ENCODE measurements at regions of chr19 and their contacts with region 1.

Region 1: GRCh38 chr19:56403764-56404704 is at the start of gene ZNF583:
- DNase-seq: peak; percentile 97 to 98
- ATAC-seq: peak; percentile 97 to 99 (median 99)
- H3K4me3 ChIP-seq: peak within 1 kb of the TSS; percentile 57 to 80 (median 72)
- H3K27ac ChIP-seq: peak within 1 kb of the TSS; percentile 93 to 99 (median 96)
- H3K4me1 ChIP-seq: peaks cover 4 to 20% (median 14%) of the 10 kb centered on the region in 9 donors
- H3K27me3 ChIP-seq: no peaks in the 10 kb centered on the region
- CTCF ChIP-seq: no peak
- total RNA-seq, gene ZNF583: 4.6 to 7.1 (median 5.4) TPM

Region 2: DNA sequence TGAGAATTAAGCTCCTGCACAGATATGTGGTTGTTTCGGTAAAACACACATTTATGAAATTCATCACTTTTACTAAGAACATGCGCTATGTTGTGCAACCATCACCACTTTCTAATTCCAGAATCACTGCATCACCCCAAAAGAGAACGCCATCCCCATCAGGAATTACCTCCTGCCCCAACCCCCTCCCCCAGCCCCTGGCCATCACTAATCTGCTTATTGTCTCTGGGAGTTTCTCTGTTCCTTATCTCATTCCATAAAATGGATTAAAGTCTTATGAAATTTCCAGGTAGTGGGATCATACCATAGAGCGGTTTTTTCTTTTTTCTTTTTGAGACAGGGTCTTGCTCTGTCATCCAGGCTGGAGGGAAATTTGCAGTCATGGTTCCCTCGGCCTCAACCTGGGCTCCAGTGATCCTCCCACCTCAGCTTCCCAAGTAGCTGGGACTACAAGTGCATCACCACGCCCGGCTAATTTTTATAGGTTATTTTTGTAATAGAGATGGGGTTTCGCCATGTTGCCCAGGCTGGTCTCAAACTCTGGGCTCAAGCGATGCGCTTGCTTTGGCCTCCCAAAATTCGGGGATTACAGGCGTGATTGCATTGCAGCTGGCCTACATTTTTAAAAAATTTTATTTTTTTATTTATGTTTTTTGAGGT is 209.9 kb before region 1 on chr19:
- intact Hi-C with region 1: no loop called
- DNase-seq: no peak
- ATAC-seq: no peak
- H3K4me3 ChIP-seq: no peak overlapping the region
- H3K27ac ChIP-seq: no peak overlapping the region
- H3K4me1 ChIP-seq: no peaks in the 10 kb centered on the region
- H3K27me3 ChIP-seq: peaks cover 0 to 2% (median 0%) of the 10 kb centered on the region in 7 donors
- CTCF ChIP-seq: no peak

Region 3: GRCh38 chr19:56252699-56253422 is 151.2 kb before region 1 on chr19:
- intact Hi-C with region 1: no loop called
- DNase-seq: peak; percentile 57 to 85
- ATAC-seq: peak; percentile 43 to 86 (median 76)
- H3K4me3 ChIP-seq: no peak overlapping the region
- H3K27ac ChIP-seq: no peak overlapping the region
- H3K4me1 ChIP-seq: peaks cover 0 to 4% (median 0%) of the 10 kb centered on the region in 9 donors
- H3K27me3 ChIP-seq: no peaks in the 10 kb centered on the region
- CTCF ChIP-seq: peak; percentile 58 to 87 (median 79)

Region 4: GRCh38 chr19:56356944-56357343 is 47.1 kb before region 1 on chr19:
- intact Hi-C with region 1: no loop called
- DNase-seq: no peak
- ATAC-seq: no peak
- H3K4me3 ChIP-seq: no peak overlapping the region
- H3K27ac ChIP-seq: no peak overlapping the region
- H3K4me1 ChIP-seq: no peaks in the 10 kb centered on the region
- H3K27me3 ChIP-seq: no peaks in the 10 kb centered on the region
- CTCF ChIP-seq: no peak

Region 5: GRCh38 chr19:56507446-56508289 is 103.6 kb after region 1 on chr19 and contains the start of gene ZNF471:
- intact Hi-C with region 1: loop called in 1 of 10 experiments (anchors 10 kb)
- DNase-seq: peak; percentile 99
- ATAC-seq: peak; percentile 100
- H3K4me3 ChIP-seq: peak within 1 kb of the TSS; percentile 48 to 85 (median 71)
- H3K27ac ChIP-seq: peak within 1 kb of the TSS; percentile 93 to 99 (median 98)
- H3K4me1 ChIP-seq: peaks cover 0 to 17% (median 11%) of the 10 kb centered on the region in 9 donors
- H3K27me3 ChIP-seq: no peaks in the 10 kb centered on the region
- CTCF ChIP-seq: no peak
- total RNA-seq, gene ZNF471: 3.9 to 7.7 (median 5.5) TPM

Region 6: DNA sequence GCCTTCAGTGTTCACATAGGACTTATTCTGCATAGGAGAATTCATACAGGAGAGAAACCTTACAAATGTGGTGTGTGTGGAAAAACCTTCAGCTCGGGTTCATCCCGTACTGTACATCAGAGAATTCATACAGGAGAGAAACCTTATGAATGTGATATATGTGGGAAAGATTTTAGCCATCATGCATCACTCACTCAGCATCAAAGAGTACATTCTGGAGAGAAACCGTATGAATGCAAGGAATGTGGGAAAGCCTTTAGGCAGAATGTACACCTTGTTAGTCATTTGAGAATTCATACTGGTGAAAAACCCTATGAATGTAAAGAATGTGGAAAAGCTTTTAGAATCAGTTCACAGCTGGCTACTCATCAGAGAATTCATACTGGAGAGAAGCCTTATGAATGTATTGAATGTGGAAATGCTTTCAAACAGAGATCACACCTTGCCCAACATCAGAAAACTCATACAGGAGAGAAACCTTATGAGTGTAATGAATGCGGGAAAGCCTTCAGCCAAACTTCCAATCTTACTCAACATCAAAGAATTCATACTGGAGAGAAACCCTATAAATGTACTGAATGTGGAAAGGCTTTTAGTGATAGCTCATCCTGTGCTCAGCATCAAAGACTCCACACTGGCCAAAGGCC is 121.3 kb after region 1 on chr19:
- intact Hi-C with region 1: loop called in 2 of 10 experiments (anchors 5 to 10 kb)
- DNase-seq: no peak
- ATAC-seq: no peak
- H3K4me3 ChIP-seq: no peak overlapping the region
- H3K27ac ChIP-seq: no peak overlapping the region
- H3K4me1 ChIP-seq: no peaks in the 10 kb centered on the region
- H3K27me3 ChIP-seq: no peaks in the 10 kb centered on the region
- CTCF ChIP-seq: no peak

Region 7: DNA sequence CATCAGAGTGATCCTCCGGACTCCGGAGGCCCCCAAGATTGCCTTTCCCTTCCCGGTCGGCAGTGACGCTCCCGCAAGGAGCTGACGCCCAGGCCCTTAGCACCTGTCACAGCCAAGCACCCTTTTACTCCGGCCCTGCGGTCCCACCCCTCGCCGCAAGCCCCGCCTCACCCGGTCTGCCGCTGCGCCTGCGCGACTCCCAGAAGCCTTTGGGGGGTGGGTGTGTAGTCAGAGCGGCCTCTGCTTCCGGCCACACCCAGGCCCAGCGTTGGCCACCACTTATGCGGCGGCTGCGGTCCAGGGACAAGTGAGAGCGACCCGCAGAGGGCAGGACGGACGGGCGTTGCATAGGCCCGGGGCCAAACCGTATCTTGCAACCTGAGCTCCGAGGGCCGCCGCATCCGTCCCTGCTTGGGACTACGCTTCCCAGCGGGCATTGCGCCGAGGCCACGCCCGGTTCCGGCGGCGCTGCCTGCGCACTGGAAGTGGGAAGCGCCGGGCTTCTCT is 134.3 kb after region 1 on chr19:
- intact Hi-C with region 1: loop called in 1 of 10 experiments (anchors 10 kb)
- DNase-seq: peak; percentile 94 to 95
- ATAC-seq: peak; percentile 97 to 100 (median 99)
- H3K4me3 ChIP-seq: peak overlapping the region; percentile 59 to 93 (median 75)
- H3K27ac ChIP-seq: peak overlapping the region; percentile 87 to 99 (median 95)
- H3K4me1 ChIP-seq: peaks cover 0 to 22% (median 14%) of the 10 kb centered on the region in 9 donors
- H3K27me3 ChIP-seq: no peaks in the 10 kb centered on the region
- CTCF ChIP-seq: no peak

Region 8: DNA sequence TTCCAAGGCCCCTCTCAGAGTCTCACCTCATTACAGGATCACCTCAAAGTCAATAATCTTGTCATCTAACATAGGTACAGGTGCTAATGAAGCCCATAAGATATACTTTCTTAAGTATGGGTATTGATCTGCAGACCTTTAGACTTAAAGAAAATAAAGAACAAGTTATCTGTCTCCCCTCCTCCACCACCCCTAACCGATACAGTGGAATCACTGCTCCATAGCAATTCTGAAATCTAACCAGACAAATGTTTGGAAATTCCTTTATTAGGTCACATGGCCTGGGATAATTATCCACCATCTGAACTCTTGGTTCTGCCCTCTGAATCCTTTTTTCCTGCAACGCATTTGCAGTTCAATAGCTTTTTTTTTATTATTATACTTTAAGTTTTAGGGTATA is 158.7 kb after region 1 on chr19:
- intact Hi-C with region 1: no loop called
- DNase-seq: no peak
- ATAC-seq: no peak
- H3K4me3 ChIP-seq: no peak overlapping the region
- H3K27ac ChIP-seq: no peak overlapping the region
- H3K4me1 ChIP-seq: peaks cover 0 to 11% (median 5%) of the 10 kb centered on the region in 9 donors
- H3K27me3 ChIP-seq: no peaks in the 10 kb centered on the region
- CTCF ChIP-seq: no peak

Region 9: DNA sequence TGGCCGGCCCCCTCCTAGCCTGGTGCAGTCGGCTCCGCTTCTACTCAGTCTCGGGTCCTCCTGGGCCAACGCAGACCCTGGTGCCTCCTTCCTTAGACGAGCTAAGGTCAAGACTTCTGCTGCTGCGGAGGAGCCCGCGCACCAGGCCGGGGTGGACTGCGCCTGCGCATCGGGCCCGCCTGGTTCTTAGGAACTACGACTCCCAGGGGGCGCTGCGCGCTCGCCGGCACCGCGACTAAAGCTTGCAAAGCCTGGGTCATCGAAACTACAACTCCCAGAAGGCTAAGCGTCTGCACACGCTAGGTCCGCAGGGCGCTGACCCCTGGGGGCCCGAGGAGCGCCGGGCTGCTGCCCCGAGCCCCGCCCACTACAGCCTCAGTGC is 267.6 kb after region 1 on chr19 and contains the start of gene ZNF835:
- intact Hi-C with region 1: loop called in 1 of 10 experiments (anchors 5 kb)
- DNase-seq: peak; percentile 95 to 99
- ATAC-seq: peak; percentile 95 to 99 (median 98)
- H3K4me3 ChIP-seq: peak within 1 kb of the TSS; percentile 29 to 95 (median 81)
- H3K27ac ChIP-seq: peak within 1 kb of the TSS in 9 of 10 donors; percentile 46 to 82 (median 57)
- H3K4me1 ChIP-seq: peaks cover 5 to 19% (median 11%) of the 10 kb centered on the region in 9 donors
- H3K27me3 ChIP-seq: no peaks in the 10 kb centered on the region
- CTCF ChIP-seq: peak in 6 of 9 donors; percentile 40 to 59 (median 53)
- total RNA-seq, gene ZNF835: 2.0 to 8.8 (median 3.8) TPM

Measured in heart right ventricle (tissue), 16 donors.